ENCODE measurements at regions of chr12 and their contacts with region 1.

Region 1: GRCh38 chr12:56941299-56942017 is 7.2 kb upstream of the SDR9C7 start:
- DNase-seq: no peak
- ATAC-seq: peak; percentile 91
- H3K4me3 ChIP-seq: no peak overlapping the region
- H3K27ac ChIP-seq: no peak overlapping the region
- H3K4me1 ChIP-seq: peaks cover 7% of the 10 kb centered on the region
- H3K27me3 ChIP-seq: no peaks in the 10 kb centered on the region
- CTCF ChIP-seq: no peak

Region 2: GRCh38 chr12:56776654-56777053 is 164.8 kb before region 1 on chr12:
- CTCF ChIA-PET with region 1: no interaction called
- POLR2A ChIA-PET with region 1: interaction called, 11 read pairs
- in situ Hi-C with region 1: no loop called
- intact Hi-C with region 1: no loop called
- DNase-seq: no peak
- ATAC-seq: no peak
- H3K4me3 ChIP-seq: no peak overlapping the region
- H3K27ac ChIP-seq: no peak overlapping the region
- H3K4me1 ChIP-seq: no peaks in the 10 kb centered on the region
- H3K27me3 ChIP-seq: no peaks in the 10 kb centered on the region
- CTCF ChIP-seq: no peak